Naive thymus-derived CD4-positive, alpha-beta T cell (primary cell): ENCODE measurements at regions of chr12 and their contacts with region 1.

Region 1: DNA sequence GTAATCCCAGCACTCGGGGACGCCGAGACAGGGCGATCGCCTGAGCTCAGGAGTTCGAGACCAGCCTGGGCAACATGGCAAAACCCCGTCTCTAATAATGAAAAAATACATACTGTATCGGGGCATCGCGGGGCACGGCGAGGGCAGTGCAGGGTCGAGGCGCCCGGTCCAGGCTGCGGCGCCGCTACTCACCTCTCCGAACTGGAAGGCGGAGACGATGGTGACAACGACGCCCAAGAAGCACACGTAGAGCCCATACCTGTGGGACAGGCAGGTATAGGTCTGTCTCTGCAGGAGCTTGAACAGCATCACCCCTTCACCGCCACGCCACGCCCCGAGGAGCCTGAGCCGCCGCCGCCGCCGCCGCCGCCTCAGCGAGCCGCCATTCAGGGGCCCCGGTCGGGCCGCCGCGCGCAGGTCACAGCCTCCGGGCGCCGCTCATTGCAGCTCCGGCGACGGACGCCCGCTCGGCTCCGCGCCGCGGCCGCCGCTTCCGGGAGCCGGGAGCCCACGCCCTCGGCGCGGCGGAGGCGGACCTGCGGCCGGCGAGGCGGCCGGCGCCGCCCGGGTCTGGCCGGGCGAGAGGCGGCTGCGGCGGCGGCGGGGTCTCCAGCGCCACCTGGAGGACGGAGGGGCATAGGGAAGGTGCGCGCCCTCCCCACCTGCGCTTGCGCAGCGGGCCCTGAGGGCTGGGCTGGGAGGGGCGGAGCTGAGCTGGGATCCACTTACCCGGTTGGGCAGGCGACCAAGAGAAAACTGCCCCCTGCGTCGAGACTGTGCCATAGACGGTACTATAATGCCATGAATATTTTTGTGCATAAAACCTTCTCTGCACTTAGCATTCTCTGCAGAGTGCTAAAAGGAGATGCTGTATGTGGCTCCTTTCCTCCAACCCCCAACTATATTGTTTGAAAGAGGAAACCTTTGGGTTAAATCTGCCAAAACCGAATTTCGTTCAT is at the start of gene GNPTAB:
- DNase-seq: peak; percentile 92 to 98 (median 95)
- ATAC-seq: peak; percentile 98
- H3K4me3 ChIP-seq: peak within 1 kb of the TSS; percentile 89
- H3K4me3 Mint-ChIP-seq: peak within 1 kb of the TSS; percentile 88 to 99 (median 98)
- H3K27ac ChIP-seq: peak within 1 kb of the TSS; percentile 77
- H3K27ac Mint-ChIP-seq: peak within 1 kb of the TSS; percentile 76 to 98 (median 93)
- H3K4me1 ChIP-seq: peaks cover 10 to 19% of the 10 kb centered on the region in 2 donors
- H3K4me1 Mint-ChIP-seq: peaks cover 22 to 52% (median 47%) of the 10 kb centered on the region in 7 donors
- H3K27me3 ChIP-seq: no peaks in the 10 kb centered on the region
- H3K27me3 Mint-ChIP-seq: no peaks in the 10 kb centered on the region
- total RNA-seq, gene GNPTAB: 42.0 to 85.1 (median 62.2) TPM

Region 2: DNA sequence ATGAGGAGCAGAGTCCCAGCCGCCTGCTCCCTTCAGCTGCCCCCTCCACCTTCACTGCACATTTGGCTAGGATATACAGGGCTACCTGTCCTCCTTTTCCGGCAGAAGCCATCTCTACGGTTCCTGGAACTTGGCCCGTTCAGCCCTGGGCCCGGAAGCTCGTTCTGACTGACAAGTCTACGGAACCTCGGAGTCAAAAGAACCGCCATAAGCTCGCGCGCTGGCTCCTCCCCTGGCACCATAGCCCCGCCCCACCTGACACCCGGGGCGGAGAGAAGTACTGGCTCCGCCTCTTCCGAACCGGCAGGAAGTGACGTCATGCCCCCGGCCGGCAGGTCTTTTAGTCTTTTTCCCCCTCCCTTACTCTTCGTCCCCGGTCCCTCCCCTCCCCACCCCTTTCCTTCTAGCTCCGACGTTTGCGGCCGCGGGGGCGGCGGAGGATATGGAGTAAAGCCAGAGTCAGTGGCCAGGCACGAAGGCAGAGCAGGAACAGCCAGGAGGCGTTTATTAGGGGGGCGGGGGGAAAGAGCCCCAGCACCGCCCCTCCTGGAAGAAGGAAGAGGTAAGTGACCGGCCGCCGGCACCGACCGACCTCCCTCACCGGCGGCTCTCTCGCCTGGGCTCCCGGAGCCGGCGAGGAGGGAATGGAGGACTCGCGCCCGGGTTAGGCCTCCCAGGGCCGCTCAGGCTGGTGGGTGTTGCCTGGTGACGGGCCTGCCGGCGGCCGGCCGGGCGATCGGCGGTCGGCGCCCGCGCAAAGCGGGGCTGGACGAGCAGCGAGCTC is 1563.6 kb before region 1 on chr12 and contains the starts of genes DEPDC4 and SCYL2:
- CTCF ChIA-PET with region 1: no interaction called
- POLR2A ChIA-PET with region 1: no interaction called
- intact Hi-C with region 1: loop called in 1 of 2 experiments (anchors 5 kb)
- DNase-seq: peak; percentile 94 to 99 (median 97)
- ATAC-seq: peak; percentile 95
- H3K4me3 ChIP-seq: peak within 1 kb of the TSS; percentile 98
- H3K4me3 Mint-ChIP-seq: peak within 1 kb of the TSS; percentile 94 to 100 (median 98)
- H3K27ac ChIP-seq: peak within 1 kb of the TSS; percentile 96
- H3K27ac Mint-ChIP-seq: peak within 1 kb of the TSS; percentile 89 to 100 (median 98)
- H3K4me1 ChIP-seq: peaks cover 11 to 19% of the 10 kb centered on the region in 2 donors
- H3K4me1 Mint-ChIP-seq: peaks cover 18 to 54% (median 33%) of the 10 kb centered on the region in 7 donors
- H3K27me3 ChIP-seq: no peaks in the 10 kb centered on the region
- H3K27me3 Mint-ChIP-seq: no peaks in the 10 kb centered on the region
- total RNA-seq, gene DEPDC4: 0.74 to 1.3 (median 0.92) TPM
- total RNA-seq, gene SCYL2: 32.6 to 49.4 (median 42.3) TPM

Region 3: DNA sequence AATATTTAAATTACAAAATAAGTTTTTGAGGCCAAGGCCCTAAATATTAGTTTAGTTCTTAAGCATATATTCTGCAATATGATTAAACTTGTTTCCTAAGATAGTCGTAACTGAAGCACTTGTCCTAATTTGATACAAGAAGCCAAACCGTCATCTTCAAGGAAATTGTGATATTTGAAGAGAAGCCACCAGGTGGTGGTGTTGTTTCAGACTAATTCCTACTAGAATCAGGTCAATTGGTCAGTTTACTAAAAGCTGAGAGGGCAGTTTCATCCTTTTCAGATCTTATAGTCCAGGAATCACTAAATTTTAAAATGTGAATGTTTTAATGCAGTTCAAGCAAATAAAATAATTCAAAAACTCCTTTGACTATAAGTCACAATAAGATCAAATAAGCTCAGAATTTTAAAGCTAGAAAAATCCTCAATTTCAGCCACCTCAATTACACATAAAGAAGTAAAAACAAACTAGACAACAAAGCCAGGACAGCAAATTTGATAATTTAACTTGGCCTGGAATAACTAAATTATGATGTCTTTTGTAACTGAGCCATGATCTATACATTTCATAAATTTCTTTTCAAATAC is 416.0 kb before region 1 on chr12:
- CTCF ChIA-PET with region 1: interaction called, 4 read pairs
- POLR2A ChIA-PET with region 1: no interaction called
- intact Hi-C with region 1: loop called in 1 of 2 experiments (anchors 2 kb)
- DNase-seq: peak in 5 of 9 donors; percentile 11 to 23 (median 12)
- ATAC-seq: peak; percentile 40
- H3K4me3 ChIP-seq: no peak overlapping the region
- H3K4me3 Mint-ChIP-seq: no peak overlapping the region
- H3K27ac ChIP-seq: no peak overlapping the region
- H3K27ac Mint-ChIP-seq: no peak overlapping the region
- H3K4me1 ChIP-seq: no peaks in the 10 kb centered on the region
- H3K4me1 Mint-ChIP-seq: peaks cover 0 to 5% (median 0%) of the 10 kb centered on the region in 7 donors
- H3K27me3 ChIP-seq: no peaks in the 10 kb centered on the region
- H3K27me3 Mint-ChIP-seq: peaks cover 0 to 29% (median 2%) of the 10 kb centered on the region in 5 donors

Region 4: DNA sequence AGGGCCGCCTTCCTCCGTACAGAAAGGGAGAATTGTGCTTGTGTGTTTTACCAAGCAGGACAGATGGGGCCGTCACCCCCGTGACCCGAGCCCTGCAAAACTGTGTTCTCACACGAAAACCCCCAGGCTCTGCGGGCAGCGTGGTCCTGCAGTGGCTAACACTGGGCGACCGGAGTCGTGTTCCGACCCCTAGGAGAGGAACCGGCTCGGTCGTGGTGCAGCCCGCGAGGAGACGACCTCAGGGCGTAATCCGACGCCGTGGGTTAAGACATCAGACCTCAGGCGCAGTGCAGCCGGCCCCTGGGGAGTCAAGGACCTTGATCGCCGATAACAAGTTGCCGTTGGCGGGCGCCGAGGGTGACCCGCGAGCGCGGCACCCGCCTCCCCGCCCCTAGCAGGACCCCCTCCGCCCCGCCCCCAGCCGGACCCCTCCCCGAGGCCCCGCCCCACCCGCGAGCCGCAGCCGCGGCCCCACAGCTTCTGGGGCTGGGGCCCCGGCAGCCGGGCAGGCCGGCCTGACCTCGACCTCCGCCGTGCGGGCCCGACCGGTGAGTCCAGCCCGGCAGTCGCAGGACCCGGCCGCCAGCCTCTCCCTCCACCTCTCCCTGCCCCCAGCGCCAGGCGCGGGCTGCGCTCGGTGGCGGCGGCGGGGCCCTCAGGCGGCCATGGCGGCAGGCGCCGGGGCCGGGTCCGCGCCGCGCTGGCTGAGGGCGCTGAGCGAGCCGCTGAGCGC is 133.3 kb before region 1 on chr12 and contains the start of gene CHPT1:
- CTCF ChIA-PET with region 1: no interaction called
- POLR2A ChIA-PET with region 1: interaction called, 3 read pairs
- intact Hi-C with region 1: loop called in 1 of 2 experiments (anchors 1 kb)
- DNase-seq: peak; percentile 40 to 75 (median 58)
- ATAC-seq: peak; percentile 82
- H3K4me3 ChIP-seq: peak within 1 kb of the TSS; percentile 88
- H3K4me3 Mint-ChIP-seq: peak within 1 kb of the TSS; percentile 92 to 95 (median 94)
- H3K27ac ChIP-seq: peak within 1 kb of the TSS; percentile 70
- H3K27ac Mint-ChIP-seq: peak within 1 kb of the TSS; percentile 66 to 93 (median 90)
- H3K4me1 ChIP-seq: peaks cover 4 to 14% of the 10 kb centered on the region in 2 donors
- H3K4me1 Mint-ChIP-seq: peaks cover 17 to 61% (median 53%) of the 10 kb centered on the region in 7 donors
- H3K27me3 ChIP-seq: no peaks in the 10 kb centered on the region
- H3K27me3 Mint-ChIP-seq: peaks cover 0 to 23% (median 0%) of the 10 kb centered on the region in 5 donors
- total RNA-seq, gene CHPT1: 6.5 to 22.6 (median 14.5) TPM

Region 5: DNA sequence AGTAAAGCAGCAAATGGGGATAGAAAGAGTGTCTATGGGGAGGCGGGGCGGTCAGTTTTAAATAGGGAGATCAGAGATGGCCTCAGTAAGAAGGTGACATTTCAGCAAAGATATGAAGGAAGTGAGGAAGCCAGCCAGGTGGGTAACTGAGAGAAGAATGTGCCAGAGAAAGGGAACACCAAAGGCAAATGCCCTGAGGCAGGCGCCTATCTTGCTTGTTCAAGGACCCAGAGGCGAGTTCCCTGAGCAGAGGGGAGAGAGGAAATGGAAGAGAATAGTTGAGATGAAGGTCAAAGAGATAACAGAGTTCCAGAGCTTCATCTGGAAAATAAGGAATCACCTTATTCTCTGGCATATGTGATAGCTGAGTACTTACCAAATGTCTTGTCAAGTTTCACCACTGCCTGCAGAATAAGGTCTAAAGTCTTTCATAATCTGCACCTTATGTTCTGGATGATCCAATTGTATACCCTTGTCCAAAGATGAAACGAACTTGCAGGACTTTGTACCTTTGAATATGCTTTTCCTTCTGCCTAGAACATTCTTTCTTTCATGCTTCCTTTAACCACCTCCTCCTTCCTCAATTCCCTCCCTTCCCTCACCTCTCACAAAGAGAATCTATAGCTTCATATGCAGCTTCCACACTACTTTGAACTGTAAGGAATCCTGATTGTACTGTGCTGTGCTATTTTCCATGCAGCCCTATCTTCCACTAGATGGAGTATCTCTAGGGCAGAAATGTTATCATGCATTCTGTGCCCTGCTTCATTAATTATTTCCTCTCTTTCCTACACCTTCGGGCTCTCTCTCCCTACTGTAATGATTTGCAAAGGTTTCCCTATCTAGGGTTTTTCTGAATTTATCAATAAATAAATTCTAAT is 38.4 kb before region 1 on chr12:
- CTCF ChIA-PET with region 1: interaction called, 32 read pairs
- POLR2A ChIA-PET with region 1: interaction called, 3 read pairs
- intact Hi-C with region 1: loop called (anchors 1 kb)
- DNase-seq: peak in 5 of 9 donors; percentile 6 to 13 (median 10)
- ATAC-seq: peak; percentile 59
- H3K4me3 ChIP-seq: no peak overlapping the region
- H3K4me3 Mint-ChIP-seq: no peak overlapping the region
- H3K27ac ChIP-seq: no peak overlapping the region
- H3K27ac Mint-ChIP-seq: peak overlapping the region in 8 of 9 donors; percentile 2 to 75 (median 16)
- H3K4me1 ChIP-seq: peaks cover 0 to 3% of the 10 kb centered on the region in 2 donors
- H3K4me1 Mint-ChIP-seq: peaks cover 0 to 42% (median 18%) of the 10 kb centered on the region in 7 donors
- H3K27me3 ChIP-seq: no peaks in the 10 kb centered on the region
- H3K27me3 Mint-ChIP-seq: no peaks in the 10 kb centered on the region

Region 6: DNA sequence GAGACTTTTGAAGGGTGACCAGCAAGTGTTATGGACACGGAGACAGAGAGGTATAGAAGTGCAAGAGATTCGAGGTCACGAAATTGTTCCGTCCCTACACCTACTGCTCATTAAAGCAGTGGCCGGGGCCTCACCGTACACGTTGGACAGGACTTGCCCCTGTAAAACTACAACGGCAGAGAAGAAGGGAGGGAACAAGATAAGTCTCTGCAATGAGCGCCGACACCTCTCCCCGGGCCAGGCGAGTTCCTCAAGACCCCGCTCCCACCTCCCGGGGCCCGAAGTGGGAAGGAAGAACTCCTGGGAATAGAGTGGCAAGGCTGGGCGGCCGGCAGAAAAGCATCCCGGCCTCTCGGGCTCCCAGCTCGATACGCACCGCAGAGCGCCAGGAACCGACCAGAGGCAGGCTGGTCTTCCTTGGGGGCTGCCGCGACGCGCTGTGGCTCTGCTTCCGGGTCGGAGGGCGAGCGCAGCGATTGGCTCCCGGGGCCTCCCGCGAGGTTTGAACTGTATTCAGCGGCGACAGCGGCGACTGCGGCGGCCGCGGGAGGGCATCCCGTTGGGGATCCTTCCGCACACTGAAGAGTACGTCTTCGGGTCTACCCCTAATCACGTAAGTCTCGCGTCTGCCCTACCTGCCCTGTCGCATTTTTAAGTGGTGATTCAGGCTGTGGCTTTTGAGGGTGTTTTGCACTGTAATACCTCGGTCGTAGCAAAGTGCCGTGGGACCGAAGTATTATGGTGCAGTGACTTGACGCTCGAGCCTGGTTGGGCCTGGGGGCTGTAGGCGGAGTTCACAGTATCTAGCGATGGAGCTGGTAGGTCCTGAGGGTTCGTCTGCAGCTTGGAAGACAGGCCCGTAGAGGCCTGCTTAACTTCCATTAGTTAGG is 289.3 kb after region 1 on chr12 and contains the starts of genes NUP37 and PARPBP:
- CTCF ChIA-PET with region 1: no interaction called
- POLR2A ChIA-PET with region 1: no interaction called
- intact Hi-C with region 1: loop called in 1 of 2 experiments (anchors 1 kb)
- DNase-seq: peak; percentile 87 to 94 (median 91)
- ATAC-seq: peak; percentile 98
- H3K4me3 ChIP-seq: peak within 1 kb of the TSS; percentile 93
- H3K4me3 Mint-ChIP-seq: peak within 1 kb of the TSS; percentile 88 to 98 (median 93)
- H3K27ac ChIP-seq: peak within 1 kb of the TSS; percentile 91
- H3K27ac Mint-ChIP-seq: peak within 1 kb of the TSS; percentile 86 to 97 (median 92)
- H3K4me1 ChIP-seq: peaks cover 9 to 14% of the 10 kb centered on the region in 2 donors
- H3K4me1 Mint-ChIP-seq: peaks cover 14 to 49% (median 27%) of the 10 kb centered on the region in 7 donors
- H3K27me3 ChIP-seq: no peaks in the 10 kb centered on the region
- H3K27me3 Mint-ChIP-seq: no peaks in the 10 kb centered on the region
- total RNA-seq, gene NUP37: 11.9 to 47.5 (median 18.5) TPM
- total RNA-seq, gene PARPBP: 1.1 to 21.5 (median 1.5) TPM